Left cardiac atrium (tissue), 4 donors: ENCODE measurements at regions of chr18 and their contacts with region 1.

Region 1: DNA sequence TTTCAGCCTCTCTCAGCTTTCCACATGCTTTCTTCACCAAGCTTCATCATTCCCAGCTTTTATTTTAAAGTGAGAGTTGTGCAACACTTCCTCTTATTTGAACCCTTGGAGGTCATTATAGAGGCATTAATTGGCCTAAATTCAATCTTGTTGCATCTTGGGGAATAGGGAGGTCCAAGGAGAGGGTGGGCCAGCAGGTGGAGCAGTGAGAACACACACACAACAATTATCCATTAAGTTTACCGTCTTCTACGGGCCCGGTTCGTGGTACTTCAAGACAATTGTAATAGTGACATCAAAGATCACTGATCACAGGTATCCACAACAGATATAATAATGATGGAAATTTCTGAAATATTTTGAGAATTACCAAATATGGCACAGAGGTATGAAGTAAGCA is 457.2 kb upstream of the SMIM21 start:
- DNase-seq: no peak
- ATAC-seq: no peak

Region 2: GRCh38 chr18:76126327-76126726 is 241.6 kb after region 1 on chr18:
- intact Hi-C with region 1: loop called (anchors 5 to 10 kb)
- DNase-seq: no peak
- ATAC-seq: peak; percentile 31 to 63

Region 3: DNA sequence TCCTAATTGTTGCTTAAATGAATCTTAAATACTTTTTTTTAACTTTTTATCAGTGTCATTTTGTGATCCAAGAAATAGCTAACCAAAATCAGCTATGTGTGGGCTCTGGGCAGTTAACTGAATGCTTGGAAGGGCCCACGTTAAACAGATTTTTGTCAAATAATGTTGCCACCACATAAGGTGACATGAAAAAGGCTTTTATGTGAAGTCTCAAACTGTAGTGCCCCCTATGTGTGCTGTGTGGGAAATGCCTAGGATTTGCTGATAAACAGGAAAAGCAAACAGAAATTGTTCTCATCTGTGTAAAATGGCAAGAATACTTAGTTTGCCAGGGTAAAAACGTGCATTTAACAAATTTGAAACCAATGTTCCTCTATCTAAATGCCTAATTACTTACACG is 368.2 kb after region 1 on chr18:
- intact Hi-C with region 1: loop called (anchors 5 to 10 kb)
- DNase-seq: no peak
- ATAC-seq: no peak

Region 4: GRCh38 chr18:76314015-76314414 is 429.3 kb after region 1 on chr18:
- intact Hi-C with region 1: no loop called
- DNase-seq: no peak
- ATAC-seq: no peak